ENCODE measurements at regions of chr9 and their contacts with region 1.

Region 1: DNA sequence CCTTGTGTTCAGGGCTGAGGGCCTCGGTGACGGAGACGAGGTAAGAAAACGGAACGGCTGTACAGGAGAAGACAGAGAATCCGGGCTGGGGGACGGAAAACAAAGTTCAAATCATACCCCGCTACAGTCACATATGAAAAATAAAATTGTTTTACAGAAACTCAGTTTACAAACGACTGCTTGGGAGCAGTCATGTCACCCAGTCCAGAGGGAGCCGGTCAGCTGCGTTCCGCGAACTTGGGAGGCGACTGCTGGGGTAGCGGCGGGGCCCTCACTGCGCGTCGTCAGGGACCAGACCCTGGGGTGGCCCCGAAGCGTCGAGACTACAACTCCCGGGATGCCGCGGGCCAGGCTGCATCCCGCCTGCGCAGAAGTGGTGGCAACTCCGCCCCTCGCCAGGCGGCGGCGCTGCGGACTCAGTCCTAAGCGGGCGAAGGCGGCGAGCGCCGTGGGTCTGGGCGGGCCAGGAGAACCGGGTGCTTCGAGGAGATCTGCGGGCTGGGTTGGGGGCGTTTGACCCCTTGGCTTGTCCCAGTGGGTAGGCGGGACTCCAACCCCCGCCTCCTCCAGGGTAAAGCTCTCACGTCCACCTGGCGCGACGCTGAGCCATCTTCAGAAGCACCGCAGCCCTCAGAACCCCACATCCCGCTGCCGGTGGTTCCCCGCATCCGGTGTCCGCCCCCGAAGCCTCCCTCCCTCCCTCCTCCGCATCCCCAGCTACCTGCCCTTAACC is 4.0 kb downstream of the SIT1 start:
- DNase-seq: peak; percentile 88
- H3K4me3 Mint-ChIP-seq: peak overlapping the region; percentile 77
- H3K27ac Mint-ChIP-seq: peak overlapping the region; percentile 93
- H3K4me1 Mint-ChIP-seq: peaks cover 12% of the 10 kb centered on the region
- H3K27me3 Mint-ChIP-seq: no peaks in the 10 kb centered on the region
- CTCF ChIP-seq: peak; percentile 95

Region 2: DNA sequence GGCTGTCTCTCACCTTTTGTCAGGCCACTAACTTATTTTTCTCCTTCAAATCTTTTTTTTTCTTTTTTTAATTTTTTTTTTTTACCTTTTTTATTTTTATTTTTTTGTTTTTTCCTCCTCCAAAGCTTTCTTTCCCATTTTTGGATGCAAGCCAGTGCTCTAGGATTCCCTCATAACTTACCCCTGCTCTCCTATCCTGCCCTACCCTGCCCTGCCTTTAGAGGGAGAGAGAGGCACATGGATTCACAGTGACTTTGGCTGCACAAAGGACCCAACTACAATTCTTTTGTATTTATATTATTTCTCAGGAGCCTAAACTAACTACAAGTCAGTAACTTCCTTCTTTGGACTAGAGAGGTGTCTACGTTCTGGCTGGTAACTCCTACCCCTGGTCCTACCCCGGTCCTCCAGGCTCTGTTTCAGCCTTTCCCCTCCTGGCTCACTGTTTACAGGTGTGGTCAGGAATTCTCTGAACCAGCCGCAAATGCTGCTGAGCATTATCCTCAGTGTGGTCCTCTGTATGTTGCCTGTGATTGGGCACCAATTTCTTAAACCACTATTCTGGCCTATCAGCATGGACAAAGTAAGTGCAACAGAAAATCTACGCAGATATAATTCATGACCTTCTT is 165.2 kb before region 1 on chr9:
- CTCF ChIA-PET with region 1: interaction called, 3 read pairs
- POLR2A ChIA-PET with region 1: no interaction called
- intact Hi-C with region 1: loop called (anchors 5 kb)
- DNase-seq: peak; percentile 85
- H3K4me3 Mint-ChIP-seq: no peak overlapping the region
- H3K27ac Mint-ChIP-seq: no peak overlapping the region
- H3K4me1 Mint-ChIP-seq: peaks cover 10% of the 10 kb centered on the region
- H3K27me3 Mint-ChIP-seq: no peaks in the 10 kb centered on the region
- CTCF ChIP-seq: peak; percentile 84

Region 3: GRCh38 chr9:35611230-35611797 is 35.4 kb before region 1 on chr9:
- CTCF ChIA-PET with region 1: interaction called, 24 read pairs
- POLR2A ChIA-PET with region 1: interaction called, 63 read pairs
- intact Hi-C with region 1: no loop called
- DNase-seq: peak; percentile 44
- H3K4me3 Mint-ChIP-seq: no peak overlapping the region
- H3K27ac Mint-ChIP-seq: no peak overlapping the region
- H3K4me1 Mint-ChIP-seq: peaks cover 7% of the 10 kb centered on the region
- H3K27me3 Mint-ChIP-seq: peaks cover 30% of the 10 kb centered on the region
- CTCF ChIP-seq: peak; percentile 54

Region 4: GRCh38 chr9:35657546-35658136 is 10.9 kb after region 1 on chr9 and contains the start of gene RMRP:
- CTCF ChIA-PET with region 1: interaction called, 62 read pairs
- POLR2A ChIA-PET with region 1: interaction called, 61 read pairs
- intact Hi-C with region 1: no loop called
- DNase-seq: peak; percentile 99
- H3K4me3 Mint-ChIP-seq: peak within 1 kb of the TSS; percentile 62
- H3K27ac Mint-ChIP-seq: peak within 1 kb of the TSS; percentile 100
- H3K4me1 Mint-ChIP-seq: peaks cover 21% of the 10 kb centered on the region
- H3K27me3 Mint-ChIP-seq: no peaks in the 10 kb centered on the region
- CTCF ChIP-seq: no peak
- total RNA-seq, gene RMRP: 13,245 and 17,503 TPM in 2 replicates

Region 5: DNA sequence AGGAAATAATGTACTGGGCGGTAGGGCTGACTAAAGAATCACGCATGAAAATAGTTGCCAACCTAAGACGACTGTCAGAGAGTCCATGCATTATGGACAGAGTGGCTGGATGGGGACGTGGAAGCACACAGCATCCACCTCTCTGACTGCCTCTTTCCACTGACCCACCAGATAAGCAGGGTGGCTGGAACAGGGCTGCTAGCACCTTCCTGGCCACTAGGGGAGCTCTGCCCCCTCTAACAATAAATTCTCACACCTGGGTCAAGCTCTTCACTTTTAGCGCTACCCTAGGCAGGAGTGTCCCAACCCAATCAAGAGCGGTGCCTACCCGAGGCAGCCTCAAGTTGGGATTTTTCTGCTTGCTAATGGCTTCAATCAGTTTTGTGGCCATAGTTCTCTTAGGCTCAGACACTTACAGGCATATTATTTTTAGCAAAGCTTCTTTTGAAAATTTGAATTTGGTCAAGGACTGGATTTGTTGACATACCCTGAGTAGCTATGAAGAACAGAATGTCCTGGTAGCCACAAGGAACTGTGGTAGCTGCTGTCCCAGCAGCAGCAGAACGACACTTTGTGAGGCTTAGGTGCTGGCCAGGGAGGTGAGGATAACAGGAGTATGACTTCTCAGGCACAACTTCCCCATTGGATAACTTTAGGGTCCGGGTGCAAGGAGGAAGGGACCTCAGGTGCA is 50.0 kb after region 1 on chr9:
- CTCF ChIA-PET with region 1: interaction called, 28 read pairs
- POLR2A ChIA-PET with region 1: interaction called, 9 read pairs
- intact Hi-C with region 1: no loop called
- DNase-seq: peak; percentile 68
- H3K4me3 Mint-ChIP-seq: no peak overlapping the region
- H3K27ac Mint-ChIP-seq: no peak overlapping the region
- H3K4me1 Mint-ChIP-seq: no peaks in the 10 kb centered on the region
- H3K27me3 Mint-ChIP-seq: no peaks in the 10 kb centered on the region
- CTCF ChIP-seq: peak; percentile 72

Region 6: GRCh38 chr9:35814841-35815543 is 168.3 kb after region 1 on chr9 and contains the start of gene HINT2:
- CTCF ChIA-PET with region 1: no interaction called
- POLR2A ChIA-PET with region 1: no interaction called
- intact Hi-C with region 1: loop called (anchors 2 kb)
- DNase-seq: peak; percentile 99
- H3K4me3 Mint-ChIP-seq: peak within 1 kb of the TSS; percentile 87
- H3K27ac Mint-ChIP-seq: peak within 1 kb of the TSS; percentile 84
- H3K4me1 Mint-ChIP-seq: peaks cover 22% of the 10 kb centered on the region
- H3K27me3 Mint-ChIP-seq: peaks cover 11% of the 10 kb centered on the region
- CTCF ChIP-seq: no peak
- total RNA-seq, gene HINT2: 45.4 and 48.2 TPM in 2 replicates

Region 7: DNA sequence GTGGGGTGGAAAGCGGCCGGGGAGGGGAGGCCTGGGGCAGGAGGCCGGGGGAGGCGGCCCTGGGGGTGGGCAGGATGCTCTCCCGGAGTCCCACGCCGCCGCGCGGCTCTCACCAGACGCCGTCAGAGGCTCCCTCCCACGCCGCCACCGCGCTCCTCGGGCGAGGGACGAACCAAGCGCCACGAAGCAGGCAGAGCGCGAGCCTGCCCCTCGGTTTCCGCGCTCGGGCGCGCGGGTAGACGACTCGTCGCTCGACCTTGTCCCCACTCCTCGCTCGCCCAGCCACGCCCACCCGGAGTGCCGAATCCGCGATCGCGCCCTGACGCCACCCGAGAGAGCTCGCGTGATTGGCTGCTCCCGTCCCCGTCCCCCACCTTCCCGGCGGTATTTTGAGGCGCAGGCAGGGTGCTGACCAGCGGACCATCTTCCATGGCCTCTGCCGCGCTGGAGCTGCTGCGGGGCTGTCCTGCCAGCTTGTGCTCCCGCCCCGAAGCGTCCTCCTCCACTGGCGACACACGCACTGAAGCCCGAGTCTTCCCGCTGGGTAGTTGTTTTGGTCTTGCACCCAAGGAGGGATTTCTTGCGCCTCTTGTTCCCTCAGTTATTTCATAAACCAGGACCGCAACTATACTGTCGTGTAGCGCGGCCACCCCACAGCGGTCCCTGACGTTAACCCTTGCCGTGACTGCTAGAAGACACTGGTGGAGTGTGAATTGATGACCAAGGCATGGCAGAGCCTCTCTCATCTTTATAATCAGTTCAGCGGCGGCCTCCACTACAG is 611.7 kb after region 1 on chr9 and contains the start of gene GNE:
- CTCF ChIA-PET with region 1: no interaction called
- POLR2A ChIA-PET with region 1: no interaction called
- intact Hi-C with region 1: no loop called
- DNase-seq: peak; percentile 92
- H3K4me3 Mint-ChIP-seq: peak within 1 kb of the TSS; percentile 95
- H3K27ac Mint-ChIP-seq: peak within 1 kb of the TSS; percentile 42
- H3K4me1 Mint-ChIP-seq: no peaks in the 10 kb centered on the region
- H3K27me3 Mint-ChIP-seq: no peaks in the 10 kb centered on the region
- CTCF ChIP-seq: no peak
- total RNA-seq, gene GNE: 14.9 and 17.4 TPM in 2 replicates